PC-9 (cell line): ENCODE measurements at regions of chr10 and their contacts with region 1.

Region 1: GRCh38 chr10:24255881-24256311 is 47.0 kb downstream of the KIAA1217 start:
- DNase-seq: peak; percentile 39 to 60
- H3K4me3 ChIP-seq: peak overlapping the region; percentile 41; the same call in 1 of the 2 replicates
- H3K27ac ChIP-seq: peak overlapping the region; percentile 57
- H3K4me1 ChIP-seq: peaks cover 45% of the 10 kb centered on the region
- H3K27me3 ChIP-seq: no peaks in the 10 kb centered on the region
- CTCF ChIP-seq: no peak

Region 2: DNA sequence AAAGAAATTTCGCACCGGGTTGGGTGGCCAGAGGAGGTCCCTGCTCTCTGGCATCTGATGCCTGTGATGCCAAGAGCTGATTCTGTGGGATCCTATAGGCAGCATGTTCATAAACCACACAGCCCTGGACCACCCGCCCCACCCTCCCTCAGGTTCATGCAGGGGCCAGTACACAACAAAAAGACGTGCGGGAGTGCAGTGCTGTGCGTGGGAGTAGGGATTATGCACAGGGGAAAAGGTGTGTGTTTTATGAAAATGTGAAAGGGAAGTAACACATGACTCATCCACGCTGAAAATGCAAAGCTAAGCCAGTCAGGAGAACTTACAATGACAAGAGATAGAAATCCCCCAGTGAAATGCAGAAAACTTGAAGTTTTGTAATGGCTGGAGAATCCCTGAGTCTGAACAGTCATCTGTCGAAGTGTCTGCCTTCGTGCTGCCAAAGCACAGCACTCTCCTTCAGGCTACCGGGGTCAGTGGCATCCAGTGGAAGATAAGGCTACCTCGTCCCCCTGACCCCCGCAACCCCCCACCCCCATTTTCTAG is 45.9 kb before region 1 on chr10:
- CTCF ChIA-PET with region 1: interaction called, 14 read pairs
- POLR2A ChIA-PET with region 1: no interaction called
- intact Hi-C with region 1: loop called (anchors 2 kb)
- DNase-seq: peak in 1 of 2 experiments; percentile 53
- H3K4me3 ChIP-seq: peak overlapping the region; percentile 47; the same call in 1 of the 2 replicates
- H3K27ac ChIP-seq: 0 out of 2 replicates have a peak overlapping the region, but pooled peaks have one; percentile 77
- H3K4me1 ChIP-seq: peaks cover 38% of the 10 kb centered on the region
- H3K27me3 ChIP-seq: no peaks in the 10 kb centered on the region
- CTCF ChIP-seq: no peak